ENCODE measurements at regions of chr3 and their contacts with region 1.

Region 1: DNA sequence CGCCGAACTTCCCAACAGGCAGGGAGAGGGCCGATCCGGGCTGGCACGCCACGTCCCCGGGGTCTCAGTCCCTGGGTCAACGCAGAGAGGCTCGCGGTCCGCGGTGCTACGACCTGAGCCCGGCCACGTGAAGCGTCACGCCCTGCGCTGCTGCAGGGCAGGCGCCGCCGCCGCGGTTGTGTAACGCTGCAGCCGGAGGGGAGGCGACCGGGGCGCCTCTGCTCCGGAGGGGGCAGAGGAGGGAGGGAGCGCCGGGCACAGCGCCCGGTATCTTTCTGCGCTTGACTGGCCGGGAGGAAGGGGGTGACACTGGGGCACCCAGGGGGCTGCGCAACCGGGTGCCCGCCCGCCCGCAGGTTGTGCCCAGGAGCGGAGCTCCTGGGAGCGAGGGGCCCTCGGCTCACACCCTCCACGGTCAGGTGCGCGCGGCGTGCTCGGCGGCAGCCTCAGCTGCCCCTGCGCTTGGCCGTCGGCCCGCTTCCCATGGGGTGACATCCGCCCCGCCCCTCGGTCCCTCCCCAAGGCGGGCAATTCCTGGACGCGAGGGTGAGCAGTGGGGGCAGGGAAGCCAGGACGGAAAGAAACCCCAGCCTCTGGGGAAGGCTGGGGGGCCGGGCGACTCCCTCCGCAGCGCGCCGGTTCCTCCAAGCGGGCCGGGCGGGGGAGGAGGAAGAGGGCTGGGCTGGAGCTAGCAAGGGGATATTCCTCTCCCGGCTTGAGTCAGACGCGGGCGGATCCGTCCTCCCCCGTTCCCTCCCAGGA is 852 bp upstream of the BHLHE40 start:
- DNase-seq: peak; percentile 94
- H3K4me3 Mint-ChIP-seq: peak overlapping the region; percentile 97
- H3K27ac Mint-ChIP-seq: peak overlapping the region; percentile 99
- H3K4me1 Mint-ChIP-seq: peaks cover 50% of the 10 kb centered on the region
- H3K27me3 Mint-ChIP-seq: no peaks in the 10 kb centered on the region

Region 2: DNA sequence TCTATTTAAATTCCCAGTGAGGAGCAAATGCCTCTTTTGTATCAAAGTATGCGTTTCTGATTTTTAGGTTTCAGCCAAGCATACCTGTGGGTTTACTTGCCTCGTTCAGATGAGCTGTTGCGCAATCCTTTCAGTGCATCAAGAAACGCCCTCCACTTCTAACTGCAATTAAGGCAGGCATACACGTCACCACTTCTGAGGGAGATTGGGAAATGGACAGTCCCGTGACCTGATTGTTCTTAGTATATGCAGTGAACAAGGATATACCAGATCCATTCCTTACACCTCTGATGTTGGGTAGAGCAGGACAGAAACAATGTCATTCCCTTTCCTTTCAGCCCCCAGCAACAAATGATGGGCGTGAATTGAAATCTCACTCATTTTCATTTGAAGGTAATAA is 266.2 kb before region 1 on chr3:
- CTCF ChIA-PET with region 1: interaction called, 158 read pairs
- DNase-seq: no peak
- H3K4me3 Mint-ChIP-seq: no peak overlapping the region
- H3K27ac Mint-ChIP-seq: no peak overlapping the region
- H3K4me1 Mint-ChIP-seq: peaks cover 17% of the 10 kb centered on the region
- H3K27me3 Mint-ChIP-seq: no peaks in the 10 kb centered on the region

Region 3: DNA sequence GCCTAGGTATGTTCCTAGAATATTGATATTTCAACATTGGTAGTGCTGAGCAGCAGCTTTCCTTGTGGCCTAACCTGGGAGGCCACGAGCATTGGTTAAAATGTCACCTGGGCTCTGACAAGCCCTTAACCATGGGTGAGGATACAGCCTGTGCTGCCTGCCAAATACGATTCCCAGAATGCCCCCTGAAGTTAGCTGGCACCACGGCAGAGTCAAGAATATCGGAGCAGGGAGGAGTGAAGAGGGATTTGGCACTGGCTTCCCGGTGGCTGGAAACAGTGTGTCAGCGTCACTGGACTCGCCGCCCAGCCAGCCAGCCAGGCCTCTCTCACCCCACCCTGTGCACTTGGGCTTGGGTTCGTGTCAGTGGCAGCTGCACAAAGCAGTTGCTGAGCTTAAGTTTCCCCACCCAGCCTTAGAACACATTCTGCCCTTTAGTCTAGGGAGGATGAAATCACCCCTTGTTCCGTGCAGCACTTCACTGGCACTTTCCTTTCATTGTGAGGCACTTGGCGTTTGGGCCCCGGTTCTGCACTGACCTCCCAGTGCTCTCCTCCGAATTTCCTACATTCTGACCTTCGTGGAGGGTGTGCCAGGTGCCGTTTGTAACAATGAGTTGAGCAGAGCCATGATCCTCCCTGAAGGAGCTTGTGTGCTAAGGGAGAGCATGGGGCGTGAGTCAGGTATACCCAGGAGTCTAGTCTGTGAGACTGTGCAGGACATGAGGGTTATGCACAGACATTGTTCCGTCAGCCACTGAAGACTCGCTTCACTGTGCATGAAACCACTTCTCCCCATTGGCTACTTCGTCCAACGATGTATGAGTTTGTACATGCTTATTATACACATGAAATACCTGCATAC is 151.9 kb before region 1 on chr3:
- CTCF ChIA-PET with region 1: interaction called, 27 read pairs
- DNase-seq: no peak
- H3K4me3 Mint-ChIP-seq: peak overlapping the region; percentile 78
- H3K27ac Mint-ChIP-seq: peak overlapping the region; percentile 86
- H3K4me1 Mint-ChIP-seq: peaks cover 97% of the 10 kb centered on the region
- H3K27me3 Mint-ChIP-seq: peaks cover 3% of the 10 kb centered on the region

Region 4: GRCh38 chr3:4845882-4846281 is 132.5 kb before region 1 on chr3:
- CTCF ChIA-PET with region 1: interaction called, 28 read pairs
- DNase-seq: no peak
- H3K4me3 Mint-ChIP-seq: peak overlapping the region; percentile 39
- H3K27ac Mint-ChIP-seq: peak overlapping the region; percentile 90
- H3K4me1 Mint-ChIP-seq: peaks cover 99% of the 10 kb centered on the region
- H3K27me3 Mint-ChIP-seq: no peaks in the 10 kb centered on the region

Region 5: DNA sequence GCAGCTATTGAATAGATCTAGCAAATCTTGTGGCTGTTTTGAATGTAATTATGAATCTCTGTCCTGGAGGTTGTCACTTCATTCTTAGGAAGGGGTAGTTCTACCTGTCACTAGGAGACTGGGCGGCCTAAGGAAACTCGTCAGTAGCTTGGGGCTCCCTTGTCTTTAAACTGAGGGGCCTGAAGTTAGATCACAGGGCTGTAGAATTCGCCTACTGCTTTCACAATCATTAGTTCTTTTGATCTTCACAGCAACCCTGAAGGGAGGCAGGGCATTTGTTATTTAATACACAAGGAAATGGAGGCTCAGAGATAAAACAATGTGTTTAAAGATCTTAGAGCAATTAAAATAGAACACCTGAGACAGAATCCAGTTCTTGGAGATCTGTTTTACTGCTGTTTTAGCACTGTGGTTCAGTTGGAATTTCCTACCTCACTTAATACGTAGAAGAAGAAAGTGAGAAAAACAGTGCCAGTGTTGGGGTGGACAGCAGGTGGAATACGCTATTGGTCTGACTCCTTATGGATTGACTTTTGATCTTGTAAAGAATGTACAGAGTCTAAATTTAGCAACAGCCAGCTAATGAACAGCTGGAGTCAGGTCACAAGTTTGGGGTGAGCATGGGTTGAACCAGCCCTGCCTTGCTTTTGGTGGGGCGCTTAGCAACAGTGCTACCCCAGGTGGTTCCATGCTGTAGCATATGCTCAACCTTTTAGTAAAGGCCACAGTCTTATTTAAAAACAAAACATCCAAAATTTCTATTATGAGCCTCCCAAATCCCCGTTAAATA is 70.5 kb before region 1 on chr3:
- CTCF ChIA-PET with region 1: interaction called, 11 read pairs
- DNase-seq: no peak
- H3K4me3 Mint-ChIP-seq: no peak overlapping the region
- H3K27ac Mint-ChIP-seq: no peak overlapping the region
- H3K4me1 Mint-ChIP-seq: peaks cover 54% of the 10 kb centered on the region
- H3K27me3 Mint-ChIP-seq: peaks cover 3% of the 10 kb centered on the region

Region 6: GRCh38 chr3:5002174-5002870 is 23.9 kb after region 1 on chr3:
- CTCF ChIA-PET with region 1: no interaction called
- DNase-seq: peak; percentile 50
- H3K4me3 Mint-ChIP-seq: no peak overlapping the region
- H3K27ac Mint-ChIP-seq: peak overlapping the region; percentile 39
- H3K4me1 Mint-ChIP-seq: peaks cover 45% of the 10 kb centered on the region
- H3K27me3 Mint-ChIP-seq: peaks cover 24% of the 10 kb centered on the region

Region 7: GRCh38 chr3:5016218-5017161 is 38.1 kb after region 1 on chr3:
- CTCF ChIA-PET with region 1: interaction called, 112 read pairs
- DNase-seq: peak; percentile 56
- H3K4me3 Mint-ChIP-seq: no peak overlapping the region
- H3K27ac Mint-ChIP-seq: peak overlapping the region; percentile 42
- H3K4me1 Mint-ChIP-seq: peaks cover 89% of the 10 kb centered on the region
- H3K27me3 Mint-ChIP-seq: peaks cover 24% of the 10 kb centered on the region

Region 8: GRCh38 chr3:5057857-5058324 is 79.5 kb after region 1 on chr3:
- CTCF ChIA-PET with region 1: interaction called, 31 read pairs
- DNase-seq: peak; percentile 88
- H3K4me3 Mint-ChIP-seq: no peak overlapping the region
- H3K27ac Mint-ChIP-seq: no peak overlapping the region
- H3K4me1 Mint-ChIP-seq: peaks cover 26% of the 10 kb centered on the region
- H3K27me3 Mint-ChIP-seq: peaks cover 25% of the 10 kb centered on the region